SK-N-SH (cell line): ENCODE measurements at regions of chr7 and their contacts with region 1.

Region 1: GRCh38 chr7:8290645-8291314 is 28.8 kb upstream of the ICA1 start:
- DNase-seq: peak; percentile 77
- H3K4me3 ChIP-seq: no peak overlapping the region
- H3K27ac ChIP-seq: peak overlapping the region in 1 of 2 experiments; percentile 100; a peak in 3 of 4 replicates
- H3K4me1 ChIP-seq: peaks cover 0 to 61% of the 10 kb centered on the region in 2 experiments; a peak in 2 of 4 replicates
- H3K27me3 ChIP-seq: no peaks in the 10 kb centered on the region
- CTCF ChIP-seq: no peak
- EP300 ChIP-seq: peak; percentile 46 to 100; a peak in 3 of 4 replicates
- RAD21 ChIP-seq: peak; percentile 45

Region 2: GRCh38 chr7:8226501-8226900 is 64.3 kb before region 1 on chr7:
- CTCF ChIA-PET with region 1: interaction called, 83 read pairs
- POLR2A ChIA-PET with region 1: interaction called, 74 read pairs
- DNase-seq: no peak
- H3K4me3 ChIP-seq: no peak overlapping the region
- H3K27ac ChIP-seq: peak overlapping the region in 1 of 2 experiments; percentile 100; a peak in 2 of 4 replicates
- H3K4me1 ChIP-seq: peaks cover 0 to 68% of the 10 kb centered on the region in 2 experiments; a peak in 2 of 4 replicates
- H3K27me3 ChIP-seq: no peaks in the 10 kb centered on the region
- CTCF ChIP-seq: no peak
- EP300 ChIP-seq: peak in 1 of 2 experiments; percentile 56; a peak in 2 of 4 replicates
- RAD21 ChIP-seq: no peak

Region 3: GRCh38 chr7:8232999-8233847 is 57.6 kb before region 1 on chr7:
- CTCF ChIA-PET with region 1: interaction called, 83 read pairs
- POLR2A ChIA-PET with region 1: interaction called, 74 read pairs
- DNase-seq: no peak
- H3K4me3 ChIP-seq: no peak overlapping the region
- H3K27ac ChIP-seq: peak overlapping the region in 1 of 2 experiments; percentile 100; a peak in 2 of 4 replicates
- H3K4me1 ChIP-seq: peaks cover 0 to 60% of the 10 kb centered on the region in 2 experiments; a peak in 2 of 4 replicates
- H3K27me3 ChIP-seq: no peaks in the 10 kb centered on the region
- CTCF ChIP-seq: no peak
- EP300 ChIP-seq: peak in 1 of 2 experiments; percentile 52; a peak in 1 of 4 replicates
- RAD21 ChIP-seq: no peak

Region 4: DNA sequence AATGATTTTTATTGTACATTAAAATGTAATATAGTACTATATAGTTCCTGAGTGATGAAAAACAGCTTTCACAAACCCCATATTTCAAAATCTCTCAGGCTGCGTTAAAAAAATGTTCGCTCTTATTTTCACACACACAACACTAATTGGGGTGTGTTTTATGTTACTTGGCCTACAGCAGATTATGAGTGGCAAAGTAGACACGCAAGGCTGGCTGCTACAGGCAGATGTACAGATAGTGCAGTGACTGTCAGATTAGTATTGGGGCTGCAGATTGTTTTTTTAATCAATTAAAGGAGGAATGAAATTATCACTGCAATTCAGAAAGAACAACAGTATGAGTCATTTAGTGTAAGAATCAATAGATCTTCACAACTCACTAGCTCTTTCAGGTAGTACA is 36.4 kb after region 1 on chr7:
- CTCF ChIA-PET with region 1: interaction called, 10 read pairs
- POLR2A ChIA-PET with region 1: interaction called, 10 read pairs
- DNase-seq: peak; percentile 57
- H3K4me3 ChIP-seq: no peak overlapping the region
- H3K27ac ChIP-seq: peak overlapping the region in 1 of 2 experiments; percentile 96; a peak in 2 of 4 replicates
- H3K4me1 ChIP-seq: peaks cover 0 to 29% of the 10 kb centered on the region in 2 experiments; a peak in 2 of 4 replicates
- H3K27me3 ChIP-seq: no peaks in the 10 kb centered on the region
- CTCF ChIP-seq: no peak
- EP300 ChIP-seq: peak in 1 of 2 experiments; percentile 96; a peak in 2 of 4 replicates
- RAD21 ChIP-seq: no peak